ENCODE measurements at regions of chr16 and their contacts with region 1.

Region 1: DNA sequence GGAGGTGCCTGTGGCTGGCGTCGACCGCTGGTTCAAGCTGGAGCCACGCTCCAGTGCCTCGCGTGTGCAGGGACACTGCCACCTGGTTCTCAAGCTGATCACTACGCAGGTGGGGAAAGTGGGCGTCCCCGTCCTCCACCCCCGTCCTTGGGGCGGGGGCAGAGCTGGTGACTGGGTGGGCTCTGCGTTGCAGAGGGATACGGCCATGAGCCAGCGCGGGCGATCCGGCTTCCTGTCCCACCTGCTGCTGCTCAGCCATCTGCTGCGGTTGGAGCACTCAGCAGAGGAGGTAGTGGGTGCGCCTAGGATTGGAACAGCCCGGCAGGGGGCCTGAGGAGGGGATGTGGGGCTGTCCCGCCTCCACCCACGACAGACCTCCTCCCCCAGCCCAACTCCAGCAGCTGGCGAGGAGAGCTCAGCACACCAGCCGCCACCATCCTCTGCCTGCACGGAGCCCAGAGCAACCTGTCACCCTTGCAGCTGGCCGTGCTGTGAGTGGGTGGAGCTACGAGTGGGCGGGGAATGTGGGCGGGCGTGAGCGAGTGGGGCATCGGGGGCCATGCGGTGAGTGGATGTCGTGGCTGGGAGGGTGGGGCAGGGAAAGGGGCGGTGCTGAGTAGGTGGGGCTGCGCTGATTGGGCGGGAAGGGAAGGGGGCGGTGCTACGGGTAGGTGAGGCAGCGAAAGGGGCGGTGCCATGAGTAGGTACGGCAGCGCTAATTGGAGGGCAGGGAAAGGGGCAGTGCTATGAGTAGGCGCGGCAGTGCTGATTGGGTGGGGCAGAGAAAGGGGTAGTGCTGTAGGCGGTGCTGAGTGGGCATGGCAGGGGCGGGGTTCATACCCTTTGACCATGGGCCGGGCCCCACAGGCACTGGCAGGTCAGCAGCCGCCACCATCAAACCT is 8.9 kb downstream of the TSR3 start:
- DNase-seq: peak; percentile 96
- H3K4me3 ChIP-seq: no peak overlapping the region
- H3K27ac ChIP-seq: no peak overlapping the region
- H3K4me1 ChIP-seq: peaks cover 16% of the 10 kb centered on the region
- H3K27me3 ChIP-seq: no peaks in the 10 kb centered on the region
- CTCF ChIP-seq: no peak

Region 2: DNA sequence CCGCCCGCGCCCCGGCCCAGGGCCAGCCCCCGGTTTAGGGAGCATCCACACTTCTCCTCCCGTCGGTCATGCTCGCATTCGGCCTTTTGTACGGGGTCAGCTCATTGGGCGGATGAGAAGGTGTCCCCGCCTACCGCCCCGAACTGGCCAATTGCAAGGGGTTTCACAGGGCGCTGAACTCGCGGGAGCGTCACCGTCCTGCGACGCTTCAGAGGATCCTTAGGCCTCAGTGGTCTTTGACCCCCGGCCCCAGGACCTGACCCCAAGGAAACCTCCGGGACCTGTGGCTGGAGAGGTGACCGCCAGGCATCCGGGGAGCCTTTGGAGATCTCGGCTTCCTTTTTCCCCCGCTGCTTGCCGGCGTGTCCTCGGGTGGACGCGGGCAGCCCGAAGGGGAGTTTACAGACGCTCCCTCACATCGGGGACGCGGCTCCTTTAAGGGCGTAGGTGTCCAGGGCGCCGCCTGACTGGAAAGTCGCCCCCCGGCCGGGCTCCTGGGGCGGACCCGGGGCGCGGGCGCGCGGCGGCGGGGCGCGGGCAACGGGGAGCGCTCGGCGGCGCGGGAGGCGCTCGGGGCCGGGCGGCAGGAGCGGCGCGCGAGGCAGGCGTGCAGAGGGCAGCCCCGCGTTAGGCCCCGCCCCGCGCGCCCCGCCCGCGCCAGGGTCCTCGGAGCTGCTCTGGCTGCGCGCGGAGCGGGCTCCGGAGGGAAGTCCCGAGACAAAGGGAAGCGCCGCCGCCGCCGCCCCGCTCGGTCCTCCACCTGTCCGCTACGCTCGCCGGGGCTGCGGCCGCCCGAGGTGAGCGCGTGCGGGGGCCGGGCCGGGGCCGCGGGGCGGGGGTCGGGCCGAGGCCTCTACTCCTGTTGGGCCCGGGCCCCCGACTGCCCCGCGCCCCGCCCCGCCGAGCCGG is 33.5 kb before region 1 on chr16 and contains the start of gene UBE2I:
- CTCF ChIA-PET with region 1: no interaction called
- dilution Hi-C with region 1: no loop called
- in situ Hi-C with region 1: no loop called
- intact Hi-C with region 1: loop called (anchors 5 kb)
- DNase-seq: peak; percentile 99
- H3K4me3 ChIP-seq: peak within 1 kb of the TSS; percentile 72 to 98 (median 94)
- H3K27ac ChIP-seq: peak within 1 kb of the TSS; percentile 96
- H3K4me1 ChIP-seq: peaks cover 25% of the 10 kb centered on the region
- H3K27me3 ChIP-seq: no peaks in the 10 kb centered on the region
- CTCF ChIP-seq: no peak
- total RNA-seq, gene UBE2I: 42.7 to 157 TPM

Region 3: DNA sequence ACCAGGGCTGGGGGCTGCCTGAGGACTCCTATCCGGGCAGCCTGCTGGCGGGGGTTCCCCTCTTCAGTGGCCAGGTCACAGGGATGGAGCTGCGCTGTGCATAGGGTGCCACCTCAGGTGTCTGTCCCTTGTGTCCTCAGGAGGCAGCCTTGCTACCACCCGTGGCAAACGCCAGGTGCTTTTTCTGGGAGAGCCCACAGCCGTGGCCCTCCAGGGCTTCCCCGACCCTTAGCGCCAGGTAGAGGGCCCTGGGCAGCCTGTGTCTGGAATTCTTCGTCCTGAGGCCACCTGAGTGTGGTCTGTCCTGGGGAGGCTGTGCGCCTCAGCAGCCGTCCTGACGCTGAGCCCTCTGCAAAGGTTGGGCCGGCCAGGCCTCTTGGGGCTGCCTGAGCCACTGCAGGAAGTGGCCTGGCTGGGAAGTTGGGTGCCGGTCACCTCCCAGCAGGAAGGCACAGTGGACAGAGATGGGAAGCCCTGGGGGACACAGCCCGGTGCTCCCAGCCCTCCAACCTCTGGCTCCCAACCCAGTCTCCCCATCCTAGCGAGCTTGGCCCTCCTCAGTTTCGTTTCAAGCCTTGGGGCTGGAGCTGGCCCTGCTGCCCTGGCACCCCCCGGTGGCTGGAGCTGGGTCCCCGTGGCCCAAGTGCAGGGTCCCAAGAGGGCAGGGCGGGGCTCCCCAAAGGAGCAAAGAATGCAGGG is 17.0 kb before region 1 on chr16:
- CTCF ChIA-PET with region 1: no interaction called
- dilution Hi-C with region 1: no loop called
- in situ Hi-C with region 1: no loop called
- intact Hi-C with region 1: no loop called
- DNase-seq: no peak
- H3K4me3 ChIP-seq: no peak overlapping the region
- H3K27ac ChIP-seq: no peak overlapping the region
- H3K4me1 ChIP-seq: no peaks in the 10 kb centered on the region
- H3K27me3 ChIP-seq: no peaks in the 10 kb centered on the region
- CTCF ChIP-seq: no peak

Region 4: GRCh38 chr16:1470481-1471281 is 127.9 kb after region 1 on chr16:
- CTCF ChIA-PET with region 1: no interaction called
- dilution Hi-C with region 1: no loop called
- in situ Hi-C with region 1: no loop called
- intact Hi-C with region 1: no loop called
- DNase-seq: peak; percentile 22
- H3K4me3 ChIP-seq: no peak overlapping the region
- H3K27ac ChIP-seq: no peak overlapping the region
- H3K4me1 ChIP-seq: peaks cover 29% of the 10 kb centered on the region
- H3K27me3 ChIP-seq: no peaks in the 10 kb centered on the region
- CTCF ChIP-seq: no peak

Measured in mammary epithelial cell (primary cell).